Activated CD8-positive, alpha-beta memory T cell treated with anti-CD3 and anti-CD28 coated beads, Interleukin-2, amount 10 ng/mL, durations not matched to agents 7 days and 5 days (primary cell): ENCODE measurements at regions of chr7 and their contacts with region 1.

Region 1: DNA sequence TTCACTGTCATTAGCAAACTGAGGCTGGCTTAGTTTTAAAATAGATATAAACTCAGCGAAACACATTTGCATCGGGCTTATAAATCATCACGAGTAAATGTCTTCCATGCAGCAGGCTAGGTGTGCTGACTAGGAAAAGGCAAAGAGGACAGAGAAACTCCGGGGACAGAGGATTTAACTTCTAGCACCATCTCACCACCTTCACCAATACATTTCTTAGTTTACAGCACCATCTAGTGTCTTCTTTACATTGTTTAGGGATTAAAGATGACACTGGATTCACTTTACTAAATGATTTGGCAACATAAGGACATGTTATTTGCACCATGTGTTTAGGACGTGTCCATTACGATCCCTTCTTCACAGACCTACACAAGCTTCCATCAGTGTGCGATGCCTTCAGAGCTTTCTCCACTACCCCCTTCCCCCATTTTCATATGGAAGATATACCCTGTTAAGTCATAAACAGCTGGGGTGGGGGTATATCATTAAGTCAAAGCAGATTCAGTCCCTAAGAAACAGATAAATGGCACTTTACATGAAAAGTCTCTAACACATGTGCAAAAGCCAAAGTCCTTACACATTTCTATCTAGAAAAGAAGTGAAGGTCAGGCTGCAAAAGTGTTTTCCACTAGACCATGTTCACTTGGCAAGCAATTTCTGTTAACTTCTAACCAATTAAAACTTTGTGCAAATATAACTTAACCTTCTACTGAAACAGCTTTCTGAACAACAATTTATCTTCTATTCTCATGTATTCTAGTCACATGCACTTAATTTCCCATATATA is 103.3 kb downstream of the GRB10 start:
- DNase-seq: no peak
- ATAC-seq: peak; percentile 86
- H3K4me3 Mint-ChIP-seq: no peak overlapping the region
- H3K27ac Mint-ChIP-seq: no peak overlapping the region
- H3K4me1 Mint-ChIP-seq: peaks cover 3% of the 10 kb centered on the region
- H3K27me3 Mint-ChIP-seq: peaks cover 41% of the 10 kb centered on the region

Region 2: DNA sequence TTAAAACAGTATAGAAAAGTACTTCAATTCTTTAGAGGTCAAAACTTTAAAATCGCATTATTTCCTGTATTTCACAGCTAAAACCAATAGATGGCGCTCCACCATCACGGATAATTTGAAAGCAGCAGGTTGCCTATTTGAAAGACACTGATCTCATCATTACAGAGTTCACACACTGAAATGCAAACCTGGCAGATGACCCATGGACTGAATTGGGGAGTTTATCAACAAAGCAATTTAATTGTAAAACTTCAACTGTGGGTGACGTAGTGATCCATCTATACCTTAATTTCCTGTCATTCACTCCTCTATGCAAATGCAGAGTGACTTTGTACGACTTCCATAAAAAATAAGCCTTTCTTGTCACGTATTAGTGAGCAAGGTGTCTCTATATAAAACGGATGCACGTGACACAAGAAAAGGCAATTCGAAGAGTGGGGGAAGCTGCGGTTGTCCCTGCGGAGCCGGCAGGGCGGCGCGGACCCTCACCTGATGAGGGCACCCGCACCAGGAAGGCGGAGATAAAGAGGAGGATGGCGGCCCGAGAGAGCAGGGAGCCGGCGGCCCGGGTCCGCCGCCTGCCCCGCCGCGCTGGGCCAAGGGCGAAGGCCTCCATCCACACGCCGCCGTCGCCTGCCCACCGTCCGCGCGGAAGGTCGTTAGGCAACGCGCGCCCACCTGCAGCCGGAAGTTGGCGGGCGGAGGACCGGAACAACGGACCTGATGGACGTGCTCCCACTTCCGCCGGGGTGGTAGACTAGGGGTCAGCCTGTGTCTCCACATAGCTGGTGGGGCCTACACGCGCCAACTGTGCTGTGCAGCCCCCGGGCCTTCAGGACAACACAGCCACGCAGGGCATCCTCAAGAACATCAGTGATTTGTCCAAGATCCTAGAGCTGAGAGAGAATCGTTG is 586.6 kb before region 1 on chr7 and contains the start of gene ZPBP:
- CTCF ChIA-PET with region 1: interaction called, 16 read pairs
- DNase-seq: peak; percentile 59
- ATAC-seq: peak; percentile 75
- H3K4me3 Mint-ChIP-seq: peak within 1 kb of the TSS; percentile 76
- H3K27ac Mint-ChIP-seq: peak within 1 kb of the TSS; percentile 72
- H3K4me1 Mint-ChIP-seq: peaks cover 8% of the 10 kb centered on the region
- H3K27me3 Mint-ChIP-seq: peaks cover 24% of the 10 kb centered on the region
- total RNA-seq, gene ZPBP: not detected

Region 3: GRCh38 chr7:50595491-50596102 is 83.8 kb before region 1 on chr7:
- CTCF ChIA-PET with region 1: interaction called, 10 read pairs
- DNase-seq: no peak
- ATAC-seq: peak; percentile 67
- H3K4me3 Mint-ChIP-seq: peak overlapping the region; percentile 23
- H3K27ac Mint-ChIP-seq: peak overlapping the region; percentile 89
- H3K4me1 Mint-ChIP-seq: peaks cover 53% of the 10 kb centered on the region
- H3K27me3 Mint-ChIP-seq: peaks cover 4% of the 10 kb centered on the region

Region 4: DNA sequence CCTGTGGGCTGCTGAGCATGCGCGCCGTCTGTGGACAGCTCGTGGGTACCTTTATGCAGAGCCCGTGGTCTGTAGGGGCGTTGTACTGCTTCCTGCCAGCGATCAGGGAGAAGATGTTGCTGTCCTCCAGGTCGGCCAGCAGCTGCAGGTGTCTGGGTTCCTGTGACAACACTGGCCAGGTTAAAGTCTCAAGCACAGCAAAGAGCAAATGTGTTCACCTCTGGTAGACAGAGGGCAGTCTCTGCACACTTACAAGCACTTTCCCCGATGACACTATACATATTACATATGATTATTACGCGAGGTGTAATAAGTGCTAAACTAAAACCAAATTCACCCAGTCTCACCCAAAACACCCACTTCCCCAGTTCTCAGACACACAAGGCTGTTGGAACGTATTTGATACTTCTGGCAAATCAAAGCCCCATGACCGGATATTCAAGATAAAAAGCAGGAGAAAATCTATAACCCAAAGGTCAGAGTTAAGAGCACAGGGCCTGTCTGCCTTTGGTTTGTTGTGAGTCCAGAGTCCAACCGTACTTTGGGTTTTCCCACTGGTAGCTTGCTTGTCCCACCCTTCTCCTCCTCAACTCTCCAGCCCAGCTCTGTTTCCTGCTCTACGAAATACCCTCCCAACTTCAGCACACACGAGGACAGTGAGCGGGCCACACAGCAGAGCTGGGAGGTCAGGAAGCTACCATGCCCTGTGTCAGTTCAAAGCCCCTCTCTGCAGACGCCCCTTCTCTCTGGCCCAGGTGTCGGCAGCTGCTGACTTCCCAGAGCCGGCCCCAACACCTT is 64.5 kb before region 1 on chr7:
- CTCF ChIA-PET with region 1: interaction called, 60 read pairs
- DNase-seq: peak; percentile 55
- ATAC-seq: peak; percentile 54
- H3K4me3 Mint-ChIP-seq: no peak overlapping the region
- H3K27ac Mint-ChIP-seq: no peak overlapping the region
- H3K4me1 Mint-ChIP-seq: peaks cover 35% of the 10 kb centered on the region
- H3K27me3 Mint-ChIP-seq: peaks cover 39% of the 10 kb centered on the region

Region 5: GRCh38 chr7:50632561-50633413 is 46.6 kb before region 1 on chr7:
- CTCF ChIA-PET with region 1: interaction called, 17 read pairs
- DNase-seq: peak; percentile 74
- ATAC-seq: peak; percentile 86
- H3K4me3 Mint-ChIP-seq: no peak overlapping the region
- H3K27ac Mint-ChIP-seq: peak overlapping the region; percentile 48
- H3K4me1 Mint-ChIP-seq: peaks cover 9% of the 10 kb centered on the region
- H3K27me3 Mint-ChIP-seq: peaks cover 39% of the 10 kb centered on the region

Region 6: DNA sequence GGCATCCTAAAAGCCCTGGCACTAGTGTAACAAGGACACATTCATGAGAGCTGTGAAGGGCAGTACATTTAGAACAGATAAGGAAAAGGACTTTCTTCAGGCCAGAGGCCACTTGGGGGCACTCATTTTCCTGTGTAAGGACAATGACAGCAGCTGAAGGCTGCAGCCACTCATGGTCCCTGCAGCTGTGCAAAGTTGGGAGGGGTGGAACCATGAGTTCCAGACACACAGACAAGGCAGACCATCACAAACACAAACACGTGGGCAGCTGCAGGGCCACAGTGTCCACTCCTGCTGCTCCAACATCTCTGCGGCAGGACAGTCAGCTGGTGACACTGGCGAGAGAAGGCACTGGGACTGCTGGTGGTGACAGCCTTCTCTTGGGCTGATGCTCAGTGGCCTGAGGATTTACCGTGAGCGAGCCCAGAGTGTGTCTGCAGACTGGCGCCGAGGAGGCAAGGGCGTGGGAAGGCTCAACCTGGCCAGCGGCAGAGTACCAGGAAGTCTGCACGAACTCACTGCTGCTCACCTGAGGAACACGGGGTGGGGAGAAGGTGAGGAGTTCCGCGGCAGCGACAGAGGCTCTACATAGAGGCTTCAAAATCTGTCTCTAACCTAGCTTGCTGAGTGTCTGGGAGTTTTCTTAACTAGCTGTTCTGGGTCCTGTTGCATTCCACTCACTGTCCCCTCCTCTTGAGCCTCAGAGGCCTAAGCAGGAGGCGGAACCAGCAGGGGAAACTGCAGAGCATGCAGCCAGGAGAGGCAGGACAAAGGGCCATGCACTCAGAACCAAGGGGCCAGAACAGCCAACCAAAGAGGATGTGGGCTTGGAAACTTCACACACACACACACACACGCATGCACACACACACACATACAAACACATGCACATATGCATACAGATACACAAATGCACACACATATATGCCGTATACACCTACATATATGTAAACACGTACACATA is 37.7 kb before region 1 on chr7:
- CTCF ChIA-PET with region 1: interaction called, 11 read pairs
- DNase-seq: no peak
- ATAC-seq: no peak
- H3K4me3 Mint-ChIP-seq: no peak overlapping the region
- H3K27ac Mint-ChIP-seq: no peak overlapping the region
- H3K4me1 Mint-ChIP-seq: peaks cover 28% of the 10 kb centered on the region
- H3K27me3 Mint-ChIP-seq: peaks cover 7% of the 10 kb centered on the region

Region 7: GRCh38 chr7:51141451-51142003 is 462.1 kb after region 1 on chr7:
- CTCF ChIA-PET with region 1: interaction called, 15 read pairs
- DNase-seq: no peak
- ATAC-seq: no peak
- H3K4me3 Mint-ChIP-seq: no peak overlapping the region
- H3K27ac Mint-ChIP-seq: no peak overlapping the region
- H3K4me1 Mint-ChIP-seq: peaks cover 18% of the 10 kb centered on the region
- H3K27me3 Mint-ChIP-seq: peaks cover 13% of the 10 kb centered on the region